B cell (primary cell): ENCODE measurements at regions of chr15 and their contacts with region 1.

Region 1: DNA sequence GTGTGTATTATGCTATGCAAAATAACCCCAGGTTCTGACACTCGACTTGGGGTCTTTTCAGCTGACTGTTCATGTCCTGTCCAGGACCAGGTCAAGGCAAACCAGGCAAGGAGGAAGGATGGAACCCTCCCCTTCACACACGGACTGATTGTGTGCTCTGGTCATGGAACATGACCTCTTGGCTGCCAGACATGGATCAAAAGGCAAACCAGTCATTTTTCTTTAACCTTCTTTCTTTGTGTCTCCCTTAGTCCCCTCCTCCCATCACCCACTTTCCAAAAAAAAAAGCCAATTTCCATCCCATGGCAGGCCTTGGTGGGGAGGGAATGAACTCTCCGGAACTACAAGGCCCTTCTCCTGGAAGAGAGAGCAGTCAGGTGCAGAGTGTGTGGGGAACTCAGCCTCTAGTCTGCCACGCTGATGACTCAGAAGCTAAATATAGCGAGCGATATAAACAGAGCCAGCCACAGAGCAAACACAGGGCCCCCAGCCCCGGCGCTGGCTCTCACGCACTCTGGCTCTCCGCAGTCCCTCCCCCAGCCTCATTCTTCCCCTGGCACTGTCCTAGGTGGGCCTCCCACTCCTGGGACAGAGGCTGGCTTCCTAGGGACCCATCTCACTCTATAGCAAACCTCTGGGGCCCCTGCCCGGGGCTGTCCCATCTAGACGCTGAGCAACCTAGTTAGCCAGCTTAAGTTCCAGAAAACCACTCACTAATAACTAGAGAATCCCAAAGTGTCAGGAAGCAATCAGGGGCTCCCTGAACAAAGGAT is 10.0 kb downstream of the BMF start:
- DNase-seq: peak; percentile 90
- ATAC-seq: peak; percentile 78
- H3K4me3 ChIP-seq: peak overlapping the region in 4 of 5 experiments; percentile 13 to 53 (median 24)
- H3K4me3 Mint-ChIP-seq: peak overlapping the region; percentile 85
- H3K27ac ChIP-seq: peak overlapping the region; percentile 99 to 100
- H3K27ac Mint-ChIP-seq: peak overlapping the region; percentile 95
- H3K4me1 ChIP-seq: peaks cover 100% of the 10 kb centered on the region in 2 donors
- H3K4me1 Mint-ChIP-seq: peaks cover 92% of the 10 kb centered on the region
- H3K27me3 ChIP-seq: no peaks in the 10 kb centered on the region
- H3K27me3 Mint-ChIP-seq: no peaks in the 10 kb centered on the region
- CTCF ChIP-seq: no peak

Region 2: DNA sequence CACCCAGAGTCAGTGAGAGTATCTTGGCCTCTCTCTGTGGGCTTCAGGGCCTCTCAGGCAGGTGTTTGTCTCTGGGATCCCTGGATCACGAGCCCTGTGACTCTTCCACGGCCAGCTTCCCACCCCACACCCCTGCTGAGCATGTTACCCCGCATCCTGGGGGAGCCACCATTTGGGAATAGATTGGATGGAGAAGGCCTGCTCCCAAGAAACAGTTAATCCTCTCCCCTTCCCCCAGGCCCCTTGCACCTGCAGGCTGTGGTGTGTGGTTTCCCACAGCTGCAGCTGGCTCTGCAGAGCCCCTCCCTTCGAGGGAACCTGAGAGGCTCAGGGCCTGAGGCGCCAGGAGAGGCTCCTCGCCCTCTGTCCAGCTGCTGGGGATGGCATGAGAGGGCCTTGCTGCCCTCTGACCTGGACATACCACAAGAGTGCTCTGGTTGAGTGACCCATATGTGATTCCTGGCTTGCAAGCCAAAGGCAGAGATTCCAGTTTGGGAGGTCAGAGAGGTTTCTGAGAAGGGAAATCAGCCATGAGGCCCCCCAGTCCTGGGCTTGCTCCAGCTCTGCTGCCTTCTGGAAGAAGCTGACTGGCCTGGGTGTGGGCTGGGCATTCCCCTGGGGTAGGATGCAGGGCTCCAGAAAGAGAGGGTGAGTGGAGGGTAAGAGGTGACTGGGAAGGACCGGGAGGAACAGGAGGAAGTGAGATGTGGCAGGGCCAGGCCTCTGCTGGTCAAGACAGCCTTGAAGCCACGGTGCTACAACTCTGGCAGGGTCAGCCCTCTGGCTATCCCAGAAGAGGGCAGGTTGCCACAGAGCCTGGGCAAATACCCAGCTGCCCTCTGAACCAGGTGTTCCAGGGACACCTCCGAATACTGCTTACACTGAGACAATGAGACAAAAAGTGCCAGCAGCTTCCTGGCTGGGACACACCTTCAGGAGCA is 43.8 kb before region 1 on chr15:
- CTCF ChIA-PET with region 1: interaction called, 934 read pairs
- POLR2A ChIA-PET with region 1: interaction called, 324 read pairs
- intact Hi-C with region 1: no loop called
- DNase-seq: peak; percentile 68
- ATAC-seq: peak; percentile 77
- H3K4me3 ChIP-seq: no peak overlapping the region
- H3K4me3 Mint-ChIP-seq: peak overlapping the region; percentile 60
- H3K27ac ChIP-seq: peak overlapping the region; percentile 43 to 53
- H3K27ac Mint-ChIP-seq: peak overlapping the region; percentile 94
- H3K4me1 ChIP-seq: peaks cover 43 to 53% of the 10 kb centered on the region in 2 donors
- H3K4me1 Mint-ChIP-seq: peaks cover 63% of the 10 kb centered on the region
- H3K27me3 ChIP-seq: no peaks in the 10 kb centered on the region
- H3K27me3 Mint-ChIP-seq: no peaks in the 10 kb centered on the region
- CTCF ChIP-seq: no peak

Region 3: GRCh38 chr15:40069178-40070165 is 29.2 kb before region 1 on chr15:
- CTCF ChIA-PET with region 1: interaction called, 13 read pairs
- POLR2A ChIA-PET with region 1: interaction called, 43 read pairs
- intact Hi-C with region 1: loop called (anchors 2 kb)
- DNase-seq: peak; percentile 75
- ATAC-seq: peak; percentile 78
- H3K4me3 ChIP-seq: no peak overlapping the region
- H3K4me3 Mint-ChIP-seq: peak overlapping the region; percentile 39
- H3K27ac ChIP-seq: peak overlapping the region; percentile 54 to 78
- H3K27ac Mint-ChIP-seq: peak overlapping the region; percentile 90
- H3K4me1 ChIP-seq: peaks cover 34 to 38% of the 10 kb centered on the region in 2 donors
- H3K4me1 Mint-ChIP-seq: peaks cover 41% of the 10 kb centered on the region
- H3K27me3 ChIP-seq: no peaks in the 10 kb centered on the region
- H3K27me3 Mint-ChIP-seq: no peaks in the 10 kb centered on the region
- CTCF ChIP-seq: no peak

Region 4: DNA sequence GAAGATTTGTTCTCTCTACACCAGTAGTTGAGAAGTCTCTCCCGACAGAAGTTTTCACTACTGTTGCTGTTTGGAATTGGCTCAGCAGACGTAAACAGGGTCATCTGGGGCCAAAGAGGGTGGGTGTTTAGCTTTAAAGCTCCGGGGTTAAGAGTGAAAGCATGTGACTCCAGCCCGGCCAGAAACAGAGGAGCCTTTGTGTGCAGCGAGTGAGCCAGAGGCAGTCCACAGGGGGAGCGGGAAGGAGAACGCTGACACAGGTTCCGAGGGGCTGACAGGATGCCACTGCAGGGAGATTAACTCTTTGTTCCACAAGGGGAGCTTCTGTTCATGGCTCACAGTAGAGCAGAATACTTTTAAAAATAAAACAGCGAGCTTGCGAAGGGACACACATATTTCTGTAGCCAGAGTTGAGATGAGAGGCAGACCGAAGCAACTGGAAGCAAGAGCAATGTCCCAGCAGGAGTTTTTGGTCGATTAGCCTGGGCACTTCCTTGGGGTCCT is 16.9 kb before region 1 on chr15:
- CTCF ChIA-PET with region 1: interaction called, 489 read pairs
- POLR2A ChIA-PET with region 1: interaction called, 58 read pairs
- intact Hi-C with region 1: loop called (anchors 1 kb)
- DNase-seq: no peak
- ATAC-seq: no peak
- H3K4me3 ChIP-seq: peak overlapping the region; percentile 1 to 66 (median 14)
- H3K4me3 Mint-ChIP-seq: peak overlapping the region; percentile 74
- H3K27ac ChIP-seq: peak overlapping the region; percentile 81 to 82
- H3K27ac Mint-ChIP-seq: peak overlapping the region; percentile 96
- H3K4me1 ChIP-seq: peaks cover 37 to 49% of the 10 kb centered on the region in 2 donors
- H3K4me1 Mint-ChIP-seq: peaks cover 58% of the 10 kb centered on the region
- H3K27me3 ChIP-seq: no peaks in the 10 kb centered on the region
- H3K27me3 Mint-ChIP-seq: no peaks in the 10 kb centered on the region
- CTCF ChIP-seq: no peak

Region 5: GRCh38 chr15:40115670-40116093 is 17.0 kb after region 1 on chr15:
- CTCF ChIA-PET with region 1: interaction called, 489 read pairs
- POLR2A ChIA-PET with region 1: interaction called, 12 read pairs
- intact Hi-C with region 1: no loop called
- DNase-seq: peak; percentile 88
- ATAC-seq: peak; percentile 92
- H3K4me3 ChIP-seq: no peak overlapping the region
- H3K4me3 Mint-ChIP-seq: peak overlapping the region; percentile 69
- H3K27ac ChIP-seq: peak overlapping the region; percentile 75 to 82
- H3K27ac Mint-ChIP-seq: peak overlapping the region; percentile 99
- H3K4me1 ChIP-seq: peaks cover 22 to 25% of the 10 kb centered on the region in 2 donors
- H3K4me1 Mint-ChIP-seq: peaks cover 31% of the 10 kb centered on the region
- H3K27me3 ChIP-seq: no peaks in the 10 kb centered on the region
- H3K27me3 Mint-ChIP-seq: no peaks in the 10 kb centered on the region
- CTCF ChIP-seq: no peak

Region 6: GRCh38 chr15:40182358-40183029 is 83.8 kb after region 1 on chr15:
- CTCF ChIA-PET with region 1: no interaction called
- POLR2A ChIA-PET with region 1: interaction called, 13 read pairs
- intact Hi-C with region 1: no loop called
- DNase-seq: peak; percentile 19
- ATAC-seq: peak; percentile 49
- H3K4me3 ChIP-seq: no peak overlapping the region
- H3K4me3 Mint-ChIP-seq: peak overlapping the region; percentile 52
- H3K27ac ChIP-seq: peak overlapping the region in 1 of 2 donors; percentile 75
- H3K27ac Mint-ChIP-seq: peak overlapping the region; percentile 62
- H3K4me1 ChIP-seq: peaks cover 28 to 37% of the 10 kb centered on the region in 2 donors
- H3K4me1 Mint-ChIP-seq: peaks cover 32% of the 10 kb centered on the region
- H3K27me3 ChIP-seq: no peaks in the 10 kb centered on the region
- H3K27me3 Mint-ChIP-seq: no peaks in the 10 kb centered on the region
- CTCF ChIP-seq: no peak

Region 7: GRCh38 chr15:40550341-40551037 is 451.8 kb after region 1 on chr15:
- CTCF ChIA-PET with region 1: no interaction called
- POLR2A ChIA-PET with region 1: no interaction called
- intact Hi-C with region 1: loop called (anchors 10 kb)
- DNase-seq: peak; percentile 86
- ATAC-seq: peak; percentile 83
- H3K4me3 ChIP-seq: peak overlapping the region in 3 of 5 experiments; percentile 0 to 28 (median 19)
- H3K4me3 Mint-ChIP-seq: peak overlapping the region; percentile 75
- H3K27ac ChIP-seq: peak overlapping the region; percentile 84 to 90
- H3K27ac Mint-ChIP-seq: peak overlapping the region; percentile 91
- H3K4me1 ChIP-seq: peaks cover 80 to 100% of the 10 kb centered on the region in 2 donors
- H3K4me1 Mint-ChIP-seq: peaks cover 86% of the 10 kb centered on the region
- H3K27me3 ChIP-seq: no peaks in the 10 kb centered on the region
- H3K27me3 Mint-ChIP-seq: no peaks in the 10 kb centered on the region
- CTCF ChIP-seq: no peak